ENCODE measurements at regions of chr11 and their contacts with region 1.

Region 1: DNA sequence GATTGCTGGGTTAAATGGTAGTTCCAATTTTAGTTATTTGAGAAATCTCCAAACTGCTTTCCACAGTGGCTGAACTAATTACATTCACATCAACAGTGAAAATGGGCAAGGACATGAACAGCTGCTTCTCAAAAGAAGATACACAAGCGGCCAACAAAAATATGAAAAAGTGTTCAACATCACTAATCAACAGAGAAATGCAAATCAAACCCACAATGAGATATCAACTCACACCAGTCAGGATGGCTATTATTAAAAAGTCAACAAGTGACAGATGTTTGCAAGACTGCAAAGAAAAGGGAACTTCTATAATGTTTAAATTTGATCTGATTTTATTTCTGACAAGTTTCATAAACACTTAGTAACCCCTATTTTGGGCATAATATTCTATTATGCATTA is 537.5 kb downstream of the DLG2 start:
- DNase-seq: peak; percentile 53
- H3K4me3 ChIP-seq: peak overlapping the region; percentile 14
- H3K27ac ChIP-seq: peak overlapping the region; percentile 74
- H3K4me1 ChIP-seq: peaks cover 28% of the 10 kb centered on the region
- CTCF ChIP-seq: no peak

Region 2: GRCh38 chr11:85021058-85021457 is 68.6 kb before region 1 on chr11:
- CTCF ChIA-PET with region 1: no interaction called
- POLR2A ChIA-PET with region 1: no interaction called
- intact Hi-C with region 1: no loop called
- DNase-seq: no peak
- H3K4me3 ChIP-seq: no peak overlapping the region
- H3K27ac ChIP-seq: no peak overlapping the region
- H3K4me1 ChIP-seq: no peaks in the 10 kb centered on the region
- CTCF ChIP-seq: no peak

Region 3: DNA sequence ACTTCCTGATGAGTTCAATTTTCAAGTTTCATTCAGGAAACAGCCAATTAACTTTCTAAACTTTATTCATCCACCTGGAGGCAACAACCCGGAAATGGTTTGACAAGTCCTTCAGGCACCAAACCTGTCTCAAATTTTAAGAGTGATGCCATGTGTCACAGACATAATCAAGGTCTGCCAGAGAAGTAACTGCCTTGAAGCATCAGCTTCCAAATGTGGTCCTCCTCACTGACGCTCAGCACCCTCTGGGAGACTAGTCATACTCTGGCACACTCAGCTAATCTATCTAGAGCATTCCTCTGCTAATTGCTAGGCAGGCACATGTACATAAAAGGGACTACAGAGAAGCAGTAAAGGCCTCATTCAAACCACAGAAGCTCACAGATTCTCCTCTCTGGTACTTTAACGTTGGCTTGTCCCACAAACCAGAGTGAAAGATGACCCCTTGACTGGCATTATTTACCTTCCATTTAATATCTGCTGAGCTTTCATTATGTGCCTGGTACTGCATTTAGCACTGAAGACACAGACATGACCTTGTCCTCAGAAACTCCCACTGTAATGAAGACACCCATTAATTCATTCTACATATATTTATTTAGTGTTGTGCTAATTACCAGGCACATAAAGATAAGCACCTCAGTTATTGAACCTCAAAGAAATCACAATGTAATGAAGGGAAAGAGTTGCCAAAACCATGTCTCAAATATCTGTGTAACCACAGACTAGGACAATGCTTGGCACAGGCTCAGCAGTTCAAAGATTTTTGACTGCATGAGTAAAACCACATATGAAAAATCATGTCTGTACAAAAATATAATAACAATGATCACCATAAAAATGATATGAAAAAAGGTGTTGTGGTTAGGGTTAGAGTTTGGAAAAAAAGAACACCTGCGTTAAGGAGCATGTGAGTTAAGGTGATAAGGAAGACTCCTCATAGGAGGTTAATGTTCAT is 13.0 kb before region 1 on chr11:
- CTCF ChIA-PET with region 1: no interaction called
- POLR2A ChIA-PET with region 1: interaction called, 10 read pairs
- intact Hi-C with region 1: no loop called
- DNase-seq: peak; percentile 35
- H3K4me3 ChIP-seq: no peak overlapping the region
- H3K27ac ChIP-seq: no peak overlapping the region
- H3K4me1 ChIP-seq: peaks cover 15% of the 10 kb centered on the region
- CTCF ChIP-seq: no peak

Region 4: GRCh38 chr11:85170226-85170625 is 80.6 kb after region 1 on chr11:
- CTCF ChIA-PET with region 1: no interaction called
- POLR2A ChIA-PET with region 1: no interaction called
- intact Hi-C with region 1: no loop called
- DNase-seq: no peak
- H3K4me3 ChIP-seq: no peak overlapping the region
- H3K27ac ChIP-seq: no peak overlapping the region
- H3K4me1 ChIP-seq: no peaks in the 10 kb centered on the region
- CTCF ChIP-seq: no peak

Measured in OCI-LY7 (cell line).